ENCODE measurements at regions of chr11 and their contacts with region 1.

Region 1: DNA sequence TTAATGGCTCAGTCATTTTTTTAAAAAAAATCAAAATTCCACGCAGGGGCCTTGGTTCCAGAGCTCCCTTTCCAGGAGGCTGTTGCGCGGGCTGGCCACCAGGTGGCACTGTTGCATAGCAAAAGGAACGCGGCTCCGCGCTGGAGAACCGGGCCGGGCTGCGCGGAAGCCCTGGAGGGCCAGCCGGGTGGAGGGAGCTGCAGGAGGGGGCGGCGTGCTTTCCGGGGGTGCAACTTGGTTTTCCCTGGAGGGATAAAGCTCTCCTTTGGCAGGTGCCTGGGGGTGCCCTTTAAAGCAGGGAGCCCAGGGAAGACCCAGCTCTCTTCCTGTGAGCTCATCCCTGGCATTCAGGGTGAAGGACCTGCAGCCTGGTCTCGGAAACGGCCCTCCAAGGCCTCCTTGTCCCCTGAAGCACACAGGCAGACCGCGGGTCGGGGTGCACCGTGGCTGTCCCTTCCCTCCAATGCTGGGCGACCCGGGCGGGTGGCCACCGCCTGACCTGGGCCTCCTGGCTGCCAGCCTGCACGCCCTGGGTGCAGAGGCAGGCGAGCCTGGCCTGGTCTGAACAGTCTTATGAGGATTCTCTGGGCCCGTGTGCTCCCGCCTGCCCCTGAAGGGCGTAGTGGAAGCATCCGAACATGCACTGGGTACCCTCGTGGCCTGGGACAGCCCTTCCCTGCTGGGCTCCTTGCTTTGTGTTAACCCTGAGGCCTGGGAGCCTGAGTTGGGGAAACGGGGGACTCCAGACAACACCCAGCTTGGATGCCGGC is 23.4 kb downstream of the KRTAP5-5 start:
- DNase-seq: no peak
- H3K4me3 ChIP-seq: no peak overlapping the region
- H3K27ac ChIP-seq: no peak overlapping the region
- H3K4me1 ChIP-seq: peaks cover 0 to 9% (median 8%) of the 10 kb centered on the region in 4 donors
- H3K27me3 ChIP-seq: peaks cover 0 to 35% (median 0%) of the 10 kb centered on the region in 4 donors
- CTCF ChIP-seq: peak; percentile 97 to 99 (median 97)
- EP300 ChIP-seq: no peak
- POLR2A ChIP-seq: no peak

Region 2: GRCh38 chr11:1694064-1694845 is 41.3 kb after region 1 on chr11:
- intact Hi-C with region 1: loop called (anchors 5 kb)
- DNase-seq: peak; percentile 96
- H3K4me3 ChIP-seq: peak overlapping the region in 3 of 4 donors; percentile 38 to 55 (median 45)
- H3K27ac ChIP-seq: peak overlapping the region in 2 of 4 donors; percentile 38 to 63
- H3K4me1 ChIP-seq: peaks cover 11 to 17% (median 14%) of the 10 kb centered on the region in 4 donors
- H3K27me3 ChIP-seq: peaks cover 0 to 42% (median 0%) of the 10 kb centered on the region in 4 donors
- CTCF ChIP-seq: peak; percentile 86 to 94 (median 89)
- EP300 ChIP-seq: no peak
- POLR2A ChIP-seq: no peak

Region 3: GRCh38 chr11:1744137-1744886 is 91.4 kb after region 1 on chr11:
- intact Hi-C with region 1: no loop called
- DNase-seq: no peak
- H3K4me3 ChIP-seq: no peak overlapping the region
- H3K27ac ChIP-seq: no peak overlapping the region
- H3K4me1 ChIP-seq: peaks cover 6 to 16% (median 11%) of the 10 kb centered on the region in 4 donors
- H3K27me3 ChIP-seq: peaks cover 0 to 41% (median 0%) of the 10 kb centered on the region in 4 donors
- CTCF ChIP-seq: no peak
- EP300 ChIP-seq: no peak
- POLR2A ChIP-seq: no peak

Measured in esophagus muscularis mucosa (tissue), 4 donors.